ENCODE measurements at regions of chr2 and their contacts with region 1.

Region 1: DNA sequence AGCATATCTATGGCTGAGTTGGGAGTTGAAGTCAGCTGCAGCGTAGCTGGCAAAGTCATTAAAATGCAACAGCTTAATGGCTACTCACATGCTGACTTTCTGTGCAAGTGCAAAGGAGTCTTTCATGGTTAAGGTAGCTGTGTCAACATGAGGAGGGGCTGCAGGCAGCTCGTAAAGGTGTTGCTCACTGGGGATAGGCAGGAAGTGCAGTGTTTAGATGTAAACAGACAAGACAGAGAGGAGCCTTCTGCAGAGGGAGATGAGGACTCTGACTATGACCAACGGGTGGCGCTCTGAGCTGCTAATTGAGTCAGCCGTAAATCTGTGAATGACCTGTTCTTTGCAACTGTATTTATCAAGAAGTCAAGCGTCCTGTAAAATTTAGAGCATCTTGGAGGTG is 22.3 kb upstream of the CAVIN2 start:
- DNase-seq: peak; percentile 7
- ATAC-seq: peak; percentile 93
- H3K4me3 ChIP-seq: no peak overlapping the region
- H3K27ac ChIP-seq: no peak overlapping the region
- H3K4me1 ChIP-seq: no peaks in the 10 kb centered on the region
- H3K27me3 ChIP-seq: peaks cover 0 to 6% of the 10 kb centered on the region in 2 experiments; a peak in 2 of 4 replicates
- CTCF ChIP-seq: peak; percentile 35 to 63 (median 54)
- EP300 ChIP-seq: no peak
- POLR2A ChIP-seq: no peak
- RAD21 ChIP-seq: peak; percentile 61

Region 2: GRCh38 chr2:191811807-191812602 is 57.2 kb before region 1 on chr2:
- CTCF ChIA-PET with region 1: interaction called, 35 read pairs
- POLR2A ChIA-PET with region 1: no interaction called
- RAD21 ChIA-PET with region 1: interaction called, 12 read pairs
- SMC1A ChIA-PET with region 1: interaction called, 24 read pairs
- in situ Hi-C with region 1: no loop called
- intact Hi-C with region 1: loop called (anchors 5 kb)
- DNase-seq: no peak
- ATAC-seq: peak; percentile 91
- H3K4me3 ChIP-seq: no peak overlapping the region
- H3K27ac ChIP-seq: no peak overlapping the region
- H3K4me1 ChIP-seq: no peaks in the 10 kb centered on the region
- H3K27me3 ChIP-seq: no peaks in the 10 kb centered on the region
- CTCF ChIP-seq: peak; percentile 64 to 87 (median 73)
- EP300 ChIP-seq: no peak
- POLR2A ChIP-seq: no peak
- RAD21 ChIP-seq: peak; percentile 90

Region 3: DNA sequence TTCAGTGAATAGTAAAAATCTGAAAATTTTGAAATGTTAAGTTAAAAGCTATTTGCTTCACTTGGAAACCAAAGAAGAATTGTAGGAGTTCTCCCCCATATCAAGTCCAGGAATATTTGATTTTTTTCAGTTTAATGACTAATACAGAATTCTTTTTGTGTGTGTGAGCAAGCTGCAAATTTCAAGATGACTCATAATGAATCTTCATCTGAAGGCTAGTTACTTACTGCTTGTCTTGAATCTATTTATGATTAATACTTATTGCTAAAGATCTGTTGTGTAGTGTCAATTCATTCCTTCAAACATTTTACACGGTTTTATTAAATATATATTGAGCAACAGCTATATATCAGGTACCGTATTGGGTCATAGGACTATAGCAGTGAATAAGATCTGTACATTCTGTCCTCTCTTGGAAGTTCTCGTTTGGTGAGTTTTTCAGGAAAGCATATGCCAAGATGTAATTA is 25.5 kb after region 1 on chr2:
- CTCF ChIA-PET with region 1: interaction called, 7 read pairs
- POLR2A ChIA-PET with region 1: no interaction called
- RAD21 ChIA-PET with region 1: interaction called, 7 read pairs
- SMC1A ChIA-PET with region 1: interaction called, 11 read pairs
- in situ Hi-C with region 1: no loop called
- intact Hi-C with region 1: no loop called
- DNase-seq: no peak
- ATAC-seq: peak; percentile 50; the same call in 2 of the 3 replicates
- H3K4me3 ChIP-seq: no peak overlapping the region
- H3K27ac ChIP-seq: no peak overlapping the region
- H3K4me1 ChIP-seq: no peaks in the 10 kb centered on the region
- H3K27me3 ChIP-seq: no peaks in the 10 kb centered on the region
- CTCF ChIP-seq: no peak
- EP300 ChIP-seq: no peak
- POLR2A ChIP-seq: no peak
- RAD21 ChIP-seq: no peak

Region 4: DNA sequence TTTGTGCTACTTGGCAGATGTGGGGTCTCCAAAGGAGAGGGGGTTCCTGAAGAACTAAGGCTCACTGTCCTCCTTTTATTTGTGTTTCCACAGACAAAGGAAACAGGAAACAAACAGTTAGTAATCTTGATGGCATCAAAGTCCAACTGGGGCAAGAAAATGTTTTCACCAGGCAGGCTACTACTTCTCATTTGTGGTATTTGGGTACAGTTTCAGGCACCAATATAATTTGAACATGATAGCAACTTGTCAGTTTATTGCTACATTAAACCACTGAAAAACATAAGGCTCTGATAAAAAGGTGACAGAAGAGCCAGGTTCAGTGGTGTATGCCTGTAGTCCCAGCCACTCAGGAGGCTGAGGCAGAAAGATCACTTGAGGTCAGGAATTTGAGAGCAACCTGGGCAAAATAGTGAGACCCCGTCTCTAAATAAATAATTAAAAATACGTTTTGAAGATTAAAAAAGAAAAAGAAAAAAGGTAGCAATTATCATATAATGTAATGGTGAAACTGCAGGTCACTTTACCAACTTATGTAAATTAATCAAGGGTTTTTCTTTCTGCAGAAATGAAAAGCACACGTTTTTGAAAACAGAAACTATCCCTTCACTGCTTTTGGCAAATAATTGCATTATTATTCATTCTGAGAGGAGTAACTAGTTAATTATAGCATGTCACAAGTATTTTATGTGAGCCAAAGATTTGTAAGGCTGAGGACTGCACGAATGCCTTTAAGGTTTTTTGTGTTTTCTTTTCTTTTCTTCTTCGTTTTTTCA is 135.2 kb after region 1 on chr2:
- CTCF ChIA-PET with region 1: interaction called, 4 read pairs
- POLR2A ChIA-PET with region 1: no interaction called
- RAD21 ChIA-PET with region 1: interaction called, 3 read pairs
- SMC1A ChIA-PET with region 1: interaction called, 5 read pairs
- in situ Hi-C with region 1: no loop called
- intact Hi-C with region 1: loop called (anchors 5 kb)
- DNase-seq: peak; percentile 40
- ATAC-seq: peak; percentile 85
- H3K4me3 ChIP-seq: peak overlapping the region; percentile 39; the same call in 1 of the 2 replicates
- H3K27ac ChIP-seq: peak overlapping the region; percentile 65
- H3K4me1 ChIP-seq: peaks cover 17% of the 10 kb centered on the region
- H3K27me3 ChIP-seq: no peaks in the 10 kb centered on the region
- CTCF ChIP-seq: no peak
- EP300 ChIP-seq: peak; percentile 70 to 83
- POLR2A ChIP-seq: no peak
- RAD21 ChIP-seq: no peak

Region 5: GRCh38 chr2:192155511-192156118 is 286.4 kb after region 1 on chr2:
- CTCF ChIA-PET with region 1: interaction called, 289 read pairs
- POLR2A ChIA-PET with region 1: no interaction called
- RAD21 ChIA-PET with region 1: interaction called, 222 read pairs
- SMC1A ChIA-PET with region 1: interaction called, 244 read pairs
- in situ Hi-C with region 1: loop called (anchors 5 kb)
- intact Hi-C with region 1: no loop called
- DNase-seq: no peak
- ATAC-seq: peak; percentile 31; the same call in 1 of the 3 replicates
- H3K4me3 ChIP-seq: no peak overlapping the region
- H3K27ac ChIP-seq: no peak overlapping the region
- H3K4me1 ChIP-seq: no peaks in the 10 kb centered on the region
- H3K27me3 ChIP-seq: no peaks in the 10 kb centered on the region; a peak in 1 of 4 replicates
- CTCF ChIP-seq: no peak
- EP300 ChIP-seq: no peak
- POLR2A ChIP-seq: no peak
- RAD21 ChIP-seq: no peak